K562 (cell line): ENCODE measurements at regions of chr19 and their contacts with region 1.

Region 1: GRCh38 chr19:34327851-34328250 is 37.1 kb upstream of the GPI start:
- DNase-seq: peak; percentile 79 to 92 (median 86)
- ATAC-seq: peak; percentile 100
- H3K4me3 ChIP-seq: no peak overlapping the region
- H3K27ac ChIP-seq: peak overlapping the region; percentile 4; the same call in 1 of the 3 replicates
- H3K4me1 ChIP-seq: peaks cover 8 to 15% of the 10 kb centered on the region in 2 experiments; a peak in 4 of 5 replicates
- H3K27me3 ChIP-seq: no peaks in the 10 kb centered on the region
- CTCF ChIP-seq: no peak
- EP300 ChIP-seq: peak; percentile 59
- POLR2A ChIP-seq: no peak
- RAD21 ChIP-seq: 0 out of 4 replicates have a peak, but pooled peaks have one; percentile 5 to 9

Region 2: DNA sequence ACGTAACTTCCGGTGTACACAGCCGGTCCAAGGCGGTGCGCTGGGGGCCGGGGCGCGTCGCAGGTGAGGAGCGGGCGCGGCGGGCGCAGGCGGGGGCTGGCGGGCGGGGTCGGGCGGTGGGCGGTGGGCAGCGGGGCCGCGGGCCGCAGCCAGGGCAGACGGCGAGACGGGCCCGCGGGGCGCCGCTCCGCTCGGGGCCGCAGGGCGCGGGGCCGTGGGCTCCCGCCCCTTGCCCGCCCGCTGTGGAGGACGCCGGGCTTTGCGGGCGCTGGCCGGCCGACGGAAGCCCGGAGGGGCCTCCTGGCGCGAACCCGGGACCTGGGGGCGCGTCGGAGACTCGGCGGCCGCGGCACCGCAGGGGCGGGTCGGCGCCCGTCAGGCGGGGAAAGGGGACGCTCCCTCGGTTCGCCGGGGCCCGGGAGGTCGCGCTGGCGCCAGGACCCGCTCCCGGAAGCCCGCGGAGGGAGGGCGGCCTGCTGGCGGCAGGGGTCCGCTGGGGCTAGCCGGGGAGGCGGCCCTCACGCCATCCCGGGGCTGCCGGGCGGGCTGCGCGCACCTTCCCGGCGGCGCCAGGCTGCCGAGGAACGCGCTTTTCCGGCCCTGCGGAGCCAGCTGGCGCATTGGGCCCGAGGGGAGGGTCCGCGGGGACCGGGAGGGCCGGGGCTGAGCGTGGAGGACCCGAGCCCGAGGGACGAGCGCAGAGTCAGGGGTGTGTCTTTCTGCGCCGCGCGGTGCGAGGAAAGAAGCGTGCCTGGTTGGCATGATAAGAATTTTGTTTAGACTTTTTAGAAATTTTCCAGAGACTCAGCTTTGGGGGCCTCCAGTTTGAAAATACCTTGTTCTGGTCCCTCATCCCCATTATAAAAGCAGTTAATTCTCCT is 73.1 kb before region 1 on chr19 and contains the start of gene GARRE1:
- CTCF ChIA-PET with region 1: no interaction called
- POLR2A ChIA-PET with region 1: no interaction called
- in situ Hi-C with region 1: no loop called
- intact Hi-C with region 1: loop called (anchors 5 kb)
- DNase-seq: peak; percentile 64 to 92 (median 80)
- ATAC-seq: peak; percentile 78
- H3K4me3 ChIP-seq: peak within 1 kb of the TSS; percentile 81
- H3K27ac ChIP-seq: peak within 1 kb of the TSS; percentile 82
- H3K4me1 ChIP-seq: peaks cover 4 to 24% of the 10 kb centered on the region in 2 experiments; a peak in 3 of 5 replicates
- H3K27me3 ChIP-seq: no peaks in the 10 kb centered on the region
- CTCF ChIP-seq: no peak
- EP300 ChIP-seq: no peak
- POLR2A ChIP-seq: no peak
- RAD21 ChIP-seq: no peak
- polyA plus RNA-seq, gene GARRE1: 1.6 to 4.1 TPM

Region 3: GRCh38 chr19:34317311-34317927 is 10.4 kb before region 1 on chr19:
- CTCF ChIA-PET with region 1: no interaction called
- POLR2A ChIA-PET with region 1: interaction called, 24 read pairs
- in situ Hi-C with region 1: no loop called
- intact Hi-C with region 1: no loop called
- DNase-seq: peak; percentile 32 to 63 (median 44)
- ATAC-seq: peak; percentile 89
- H3K4me3 ChIP-seq: no peak overlapping the region
- H3K27ac ChIP-seq: peak overlapping the region; percentile 46; the same call in 1 of the 3 replicates
- H3K4me1 ChIP-seq: peaks cover 25 to 34% of the 10 kb centered on the region in 2 experiments
- H3K27me3 ChIP-seq: no peaks in the 10 kb centered on the region
- CTCF ChIP-seq: no peak
- EP300 ChIP-seq: no peak
- POLR2A ChIP-seq: no peak
- RAD21 ChIP-seq: no peak

Region 4: GRCh38 chr19:34345947-34346351 is 18.1 kb after region 1 on chr19:
- CTCF ChIA-PET with region 1: no interaction called
- POLR2A ChIA-PET with region 1: no interaction called
- in situ Hi-C with region 1: no loop called
- intact Hi-C with region 1: no loop called
- DNase-seq: peak; percentile 77 to 90 (median 82)
- ATAC-seq: peak; percentile 96
- H3K4me3 ChIP-seq: no peak overlapping the region
- H3K27ac ChIP-seq: no peak overlapping the region
- H3K4me1 ChIP-seq: peaks cover 0 to 3% of the 10 kb centered on the region in 2 experiments; a peak in 1 of 5 replicates
- H3K27me3 ChIP-seq: no peaks in the 10 kb centered on the region
- CTCF ChIP-seq: peak; percentile 82 to 86 (median 85)
- EP300 ChIP-seq: no peak
- POLR2A ChIP-seq: no peak
- RAD21 ChIP-seq: peak in 1 of 2 experiments; percentile 73; a peak in 2 of 4 replicates